ENCODE measurements at regions of chr17 and their contacts with region 1.

Region 1: GRCh38 chr17:8109661-8110464 is 8.5 kb downstream of the ALOXE3 start:
- DNase-seq: peak; percentile 72
- H3K4me3 Mint-ChIP-seq: no peak overlapping the region
- H3K27ac Mint-ChIP-seq: no peak overlapping the region
- H3K4me1 Mint-ChIP-seq: peaks cover 22% of the 10 kb centered on the region
- H3K27me3 Mint-ChIP-seq: no peaks in the 10 kb centered on the region
- CTCF ChIP-seq: peak; percentile 86

Region 2: GRCh38 chr17:8073627-8074484 is 36.0 kb before region 1 on chr17:
- CTCF ChIA-PET with region 1: interaction called, 209 read pairs
- POLR2A ChIA-PET with region 1: interaction called, 11 read pairs
- intact Hi-C with region 1: no loop called
- DNase-seq: peak; percentile 69
- H3K4me3 Mint-ChIP-seq: peak overlapping the region; percentile 52
- H3K27ac Mint-ChIP-seq: no peak overlapping the region
- H3K4me1 Mint-ChIP-seq: peaks cover 19% of the 10 kb centered on the region
- H3K27me3 Mint-ChIP-seq: peaks cover 23% of the 10 kb centered on the region
- CTCF ChIP-seq: peak; percentile 94

Region 3: DNA sequence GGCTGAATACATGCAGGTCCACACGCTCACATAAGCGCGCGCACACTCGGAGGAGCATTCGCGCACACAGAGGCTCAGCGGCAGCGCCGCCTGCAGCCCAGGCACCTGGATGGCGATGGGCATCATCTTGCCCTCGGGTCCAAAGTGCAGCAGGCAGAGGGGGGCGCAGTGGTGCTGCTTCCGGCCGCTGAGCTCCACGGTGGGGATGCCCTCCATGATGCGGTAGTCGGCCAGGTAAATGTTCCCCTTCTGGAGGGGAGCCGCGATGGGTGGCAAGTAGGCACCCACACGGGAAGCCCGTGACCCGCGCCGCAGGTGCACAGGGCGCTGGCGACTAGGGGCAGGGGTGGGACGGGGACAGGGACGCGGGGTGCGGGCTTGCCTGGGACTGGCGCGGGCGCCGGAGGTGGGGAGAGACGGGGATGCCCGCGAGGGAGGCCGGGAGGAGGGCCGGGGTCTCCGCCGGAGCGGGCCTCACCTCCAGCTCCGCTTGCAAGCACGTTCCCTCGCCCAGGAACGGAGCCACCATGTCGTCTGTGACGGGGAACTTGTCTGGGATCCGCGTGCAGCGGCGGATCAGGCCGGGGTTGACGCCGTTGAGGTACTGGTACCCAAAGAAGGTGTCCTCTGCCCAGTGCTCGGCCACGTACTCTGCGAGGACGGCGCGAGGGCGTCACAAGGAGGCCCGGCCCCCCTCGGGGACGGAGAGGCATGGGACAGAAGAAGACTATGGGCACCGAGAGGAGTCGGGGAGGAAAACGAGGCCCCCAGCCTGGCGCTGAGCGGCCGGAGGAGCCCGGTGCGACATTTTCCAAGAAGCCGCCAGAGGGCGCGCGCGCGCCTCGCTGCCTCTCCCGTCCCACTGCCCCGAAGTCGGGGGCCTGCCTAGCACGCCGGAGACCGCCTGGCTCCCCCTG is 30.3 kb before region 1 on chr17:
- CTCF ChIA-PET with region 1: interaction called, 209 read pairs
- POLR2A ChIA-PET with region 1: interaction called, 11 read pairs
- intact Hi-C with region 1: loop called (anchors 1 kb)
- DNase-seq: peak; percentile 60
- H3K4me3 Mint-ChIP-seq: peak overlapping the region; percentile 61
- H3K27ac Mint-ChIP-seq: no peak overlapping the region
- H3K4me1 Mint-ChIP-seq: peaks cover 6% of the 10 kb centered on the region
- H3K27me3 Mint-ChIP-seq: peaks cover 11% of the 10 kb centered on the region
- CTCF ChIP-seq: peak; percentile 87

Region 4: DNA sequence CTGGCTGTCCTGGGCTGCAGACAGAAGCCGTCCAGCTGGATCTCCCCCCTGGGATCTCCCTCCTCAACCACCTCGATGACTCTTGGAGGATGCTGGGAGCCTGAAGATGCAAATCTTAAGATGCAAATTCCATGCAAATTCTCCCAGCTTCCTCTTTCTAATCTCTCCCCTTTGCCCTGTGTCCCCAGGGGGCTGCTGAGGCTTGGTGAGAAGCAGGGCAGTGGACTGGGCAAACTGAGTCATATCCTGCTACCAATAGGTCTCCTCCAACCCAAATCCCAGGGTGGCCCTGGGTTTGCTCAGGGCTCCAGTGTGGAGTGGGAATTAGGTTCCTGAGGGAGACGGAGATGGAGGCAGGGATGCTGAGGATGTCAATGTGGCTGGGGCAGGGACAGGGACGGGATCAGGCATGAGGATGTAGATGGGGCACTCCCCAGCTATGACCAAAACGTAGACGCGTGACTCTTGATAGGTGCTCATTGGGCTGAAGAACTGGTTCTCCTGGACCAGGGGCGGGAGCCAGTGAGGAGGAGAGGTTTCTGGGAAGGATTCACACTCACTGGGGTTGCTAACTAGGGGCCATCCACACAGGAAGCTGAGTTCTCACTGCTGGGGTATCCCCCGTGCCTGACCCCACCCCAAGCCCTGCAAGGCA is 18.7 kb before region 1 on chr17:
- CTCF ChIA-PET with region 1: interaction called, 233 read pairs
- POLR2A ChIA-PET with region 1: interaction called, 17 read pairs
- intact Hi-C with region 1: loop called (anchors 1 kb)
- DNase-seq: no peak
- H3K4me3 Mint-ChIP-seq: no peak overlapping the region
- H3K27ac Mint-ChIP-seq: no peak overlapping the region
- H3K4me1 Mint-ChIP-seq: peaks cover 5% of the 10 kb centered on the region
- H3K27me3 Mint-ChIP-seq: peaks cover 13% of the 10 kb centered on the region
- CTCF ChIP-seq: no peak

Region 5: DNA sequence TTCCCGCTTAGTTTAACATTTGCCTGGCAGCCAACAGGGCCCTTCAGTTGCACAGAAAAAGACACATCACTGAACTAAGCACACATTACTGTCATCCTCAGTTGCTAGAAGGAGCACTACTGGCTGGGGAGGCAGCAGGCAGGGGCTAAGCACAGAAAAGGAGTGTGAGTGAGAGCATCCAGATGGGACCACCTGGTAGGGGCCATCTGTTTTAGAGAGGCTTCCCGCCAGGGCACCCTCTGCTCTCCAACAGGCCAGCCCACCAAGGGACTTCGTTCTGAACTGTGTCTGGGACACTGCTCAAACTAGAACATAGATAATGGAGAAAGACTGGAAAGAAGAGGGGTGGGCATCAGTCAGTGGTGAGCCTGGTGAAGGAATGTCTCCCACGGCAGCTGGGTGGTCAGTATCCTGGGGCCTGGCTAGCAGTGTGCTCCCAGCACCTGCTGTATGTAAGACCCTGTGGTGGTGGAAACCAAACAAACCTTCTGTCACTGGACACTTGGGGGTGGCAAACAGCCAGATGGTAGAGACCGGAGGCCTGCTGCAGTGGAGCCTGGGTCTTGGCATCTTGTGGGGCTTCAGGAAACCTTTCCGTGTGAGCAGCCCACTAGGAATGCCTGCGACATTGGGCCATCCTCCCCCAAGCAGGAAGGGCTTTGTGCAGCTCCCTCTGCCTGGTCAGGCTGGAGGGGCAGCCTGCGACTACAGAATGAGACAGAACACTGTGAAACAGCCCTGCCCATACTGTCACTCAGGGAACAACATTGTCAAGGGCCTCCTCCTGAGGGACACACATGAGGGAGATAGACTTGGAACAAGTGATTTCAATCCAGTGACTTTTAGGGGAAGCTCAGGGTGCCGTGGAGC is 165.8 kb after region 1 on chr17:
- CTCF ChIA-PET with region 1: no interaction called
- POLR2A ChIA-PET with region 1: no interaction called
- intact Hi-C with region 1: no loop called
- DNase-seq: no peak
- H3K4me3 Mint-ChIP-seq: no peak overlapping the region
- H3K27ac Mint-ChIP-seq: no peak overlapping the region
- H3K4me1 Mint-ChIP-seq: no peaks in the 10 kb centered on the region
- H3K27me3 Mint-ChIP-seq: no peaks in the 10 kb centered on the region
- CTCF ChIP-seq: no peak